Heart left ventricle (tissue), 16 donors: ENCODE measurements at regions of chr22 and their contacts with region 1.

Region 1: GRCh38 chr22:42717197-42717928 is 3.3 kb downstream of the A4GALT start:
- DNase-seq: no peak
- ATAC-seq: peak in 3 of 4 donors; percentile 11 to 27 (median 24)
- H3K4me3 ChIP-seq: peak overlapping the region in 6 of 12 donors; percentile 7 to 26 (median 14)
- H3K27ac ChIP-seq: peak overlapping the region in 11 of 12 donors; percentile 46 to 100 (median 98)
- H3K4me1 ChIP-seq: peaks cover 12 to 80% (median 56%) of the 10 kb centered on the region in 12 donors
- H3K27me3 ChIP-seq: peaks cover 0 to 30% (median 0%) of the 10 kb centered on the region in 9 donors
- CTCF ChIP-seq: no peak
- POLR2A ChIP-seq: no peak

Region 2: GRCh38 chr22:42500161-42500835 is 217.1 kb before region 1 on chr22:
- intact Hi-C with region 1: no loop called
- DNase-seq: peak; percentile 80 to 94 (median 86)
- ATAC-seq: peak; percentile 85 to 95 (median 92)
- H3K4me3 ChIP-seq: peak overlapping the region in 11 of 12 donors; percentile 2 to 55 (median 36)
- H3K27ac ChIP-seq: peak overlapping the region in 5 of 12 donors; percentile 0 to 62 (median 10)
- H3K4me1 ChIP-seq: peaks cover 0 to 17% (median 4%) of the 10 kb centered on the region in 12 donors
- H3K27me3 ChIP-seq: no peaks in the 10 kb centered on the region
- CTCF ChIP-seq: no peak
- POLR2A ChIP-seq: no peak

Region 3: DNA sequence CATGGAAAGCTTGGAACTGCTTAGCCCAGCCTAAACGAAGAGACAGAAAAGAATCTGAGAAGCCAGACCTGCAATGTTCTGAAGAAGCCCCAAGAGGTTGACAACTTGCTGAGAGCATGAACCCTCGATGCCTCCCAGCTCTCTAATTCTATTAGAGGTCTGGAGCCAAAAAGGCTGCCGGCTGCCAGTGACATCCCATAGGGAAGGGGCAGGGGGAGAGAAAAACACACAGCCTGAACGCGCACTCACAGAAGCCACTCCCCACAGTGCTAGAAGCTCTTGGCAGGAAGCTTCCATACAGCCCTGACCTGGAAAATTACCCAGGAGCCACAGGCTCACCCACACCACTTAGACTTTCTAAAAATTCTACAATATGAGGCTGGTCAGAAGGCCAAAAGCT is 121.0 kb before region 1 on chr22:
- intact Hi-C with region 1: no loop called
- DNase-seq: peak; percentile 39 to 72 (median 62)
- ATAC-seq: peak; percentile 84 to 90 (median 87)
- H3K4me3 ChIP-seq: no peak overlapping the region
- H3K27ac ChIP-seq: peak overlapping the region in 11 of 12 donors; percentile 52 to 86 (median 72)
- H3K4me1 ChIP-seq: peaks cover 3 to 35% (median 18%) of the 10 kb centered on the region in 12 donors
- H3K27me3 ChIP-seq: no peaks in the 10 kb centered on the region
- CTCF ChIP-seq: no peak
- POLR2A ChIP-seq: no peak

Region 4: DNA sequence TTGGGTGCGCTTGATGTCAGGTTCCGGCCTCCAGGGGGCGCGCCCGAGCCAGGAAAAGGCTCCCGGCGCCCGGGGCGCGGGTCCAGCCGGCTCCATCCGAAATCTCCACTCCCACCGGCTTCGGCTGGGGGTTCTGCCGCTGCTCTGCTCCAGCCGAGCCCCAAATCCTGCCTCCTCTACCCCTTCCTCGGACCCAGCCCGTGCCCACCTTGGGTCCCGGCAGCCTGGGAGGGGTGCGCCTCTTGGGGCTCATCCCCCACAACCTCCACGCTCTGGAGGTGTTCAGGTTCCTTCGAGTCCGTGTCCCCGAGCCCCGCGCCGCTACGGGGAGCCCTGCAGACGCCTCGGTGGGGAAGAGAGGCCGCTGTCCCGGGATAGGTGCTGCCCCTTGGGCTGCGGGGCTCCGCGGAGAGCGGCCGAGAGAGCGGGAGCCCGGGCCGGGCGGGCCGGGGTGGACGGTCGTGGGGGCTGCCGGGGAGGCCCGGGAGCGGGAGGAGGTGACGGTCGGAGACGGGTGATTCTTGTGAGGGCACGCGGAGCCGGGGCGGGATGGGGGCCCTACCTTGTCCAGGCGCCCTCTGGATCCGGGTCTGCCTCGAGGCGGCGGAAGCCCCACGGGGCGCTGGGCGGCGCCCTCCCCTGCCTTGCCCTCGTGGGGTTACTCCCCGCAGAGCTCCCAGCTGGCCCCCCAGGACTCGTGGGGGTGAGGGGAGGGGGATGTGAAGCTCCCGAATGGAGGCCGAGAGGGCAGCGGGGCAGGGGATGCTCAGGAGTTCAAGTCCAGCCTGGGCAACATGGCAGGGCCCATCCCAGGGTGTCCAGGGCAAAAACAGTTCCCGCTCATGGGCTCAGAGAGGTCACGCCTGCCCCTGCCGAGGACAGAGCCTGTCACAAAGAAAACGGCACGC is 55.0 kb before region 1 on chr22:
- intact Hi-C with region 1: loop called in 4 of 10 experiments (anchors 5 to 10 kb)
- DNase-seq: peak; percentile 81 to 92 (median 84)
- ATAC-seq: peak; percentile 60 to 95 (median 92)
- H3K4me3 ChIP-seq: peak overlapping the region; percentile 26 to 75 (median 57)
- H3K27ac ChIP-seq: peak overlapping the region in 11 of 12 donors; percentile 22 to 76 (median 58)
- H3K4me1 ChIP-seq: peaks cover 0 to 16% (median 11%) of the 10 kb centered on the region in 12 donors
- H3K27me3 ChIP-seq: peaks cover 0 to 9% (median 0%) of the 10 kb centered on the region in 9 donors
- CTCF ChIP-seq: peak in 11 of 12 donors; percentile 77 to 93 (median 84)
- POLR2A ChIP-seq: no peak

Region 5: DNA sequence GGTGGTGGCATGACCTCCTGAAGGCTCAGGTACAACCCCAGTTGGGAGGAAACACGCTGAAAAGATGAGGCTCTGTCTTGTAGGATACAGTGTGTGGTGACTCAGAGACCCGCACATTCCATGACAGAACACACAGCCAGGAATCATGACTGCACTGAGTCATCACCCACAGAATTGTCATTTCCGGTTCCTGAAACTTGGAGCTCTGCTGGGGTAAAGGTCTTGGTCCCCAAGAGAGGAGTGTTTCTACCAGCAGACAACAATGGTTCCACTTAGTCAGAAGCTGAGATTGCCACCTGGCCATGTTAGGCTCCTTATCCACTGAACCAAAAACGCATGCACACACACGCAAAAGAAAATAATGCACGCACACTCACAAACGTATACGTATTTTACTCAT is 36.7 kb before region 1 on chr22:
- intact Hi-C with region 1: loop called in 3 of 10 experiments (anchors 5 kb)
- DNase-seq: peak in 1 of 5 donors; percentile 79
- ATAC-seq: peak in 2 of 4 donors; percentile 27 to 66
- H3K4me3 ChIP-seq: no peak overlapping the region
- H3K27ac ChIP-seq: peak overlapping the region in 7 of 12 donors; percentile 0 to 97 (median 39)
- H3K4me1 ChIP-seq: peaks cover 35 to 92% (median 80%) of the 10 kb centered on the region in 12 donors
- H3K27me3 ChIP-seq: no peaks in the 10 kb centered on the region
- CTCF ChIP-seq: no peak
- POLR2A ChIP-seq: no peak

Region 6: GRCh38 chr22:42688241-42689211 is 28.8 kb before region 1 on chr22:
- intact Hi-C with region 1: loop called in 3 of 10 experiments (anchors 5 kb)
- DNase-seq: peak; percentile 87 to 95 (median 92)
- ATAC-seq: peak; percentile 75 to 81 (median 78)
- H3K4me3 ChIP-seq: peak overlapping the region in 2 of 12 donors; percentile 2 to 4
- H3K27ac ChIP-seq: peak overlapping the region; percentile 84 to 98 (median 94)
- H3K4me1 ChIP-seq: peaks cover 36 to 87% (median 69%) of the 10 kb centered on the region in 12 donors
- H3K27me3 ChIP-seq: no peaks in the 10 kb centered on the region
- CTCF ChIP-seq: no peak
- POLR2A ChIP-seq: peak in 1 of 2 donors; percentile 83

Region 7: GRCh38 chr22:42769574-42770447 is 52.4 kb after region 1 on chr22:
- intact Hi-C with region 1: loop called in 2 of 10 experiments (anchors 5 to 10 kb)
- DNase-seq: peak; percentile 46 to 82 (median 77)
- ATAC-seq: peak; percentile 13 to 73 (median 55)
- H3K4me3 ChIP-seq: peak overlapping the region in 9 of 12 donors; percentile 6 to 49 (median 31)
- H3K27ac ChIP-seq: peak overlapping the region in 2 of 12 donors; percentile 11 to 34
- H3K4me1 ChIP-seq: peaks cover 0 to 29% (median 9%) of the 10 kb centered on the region in 12 donors
- H3K27me3 ChIP-seq: no peaks in the 10 kb centered on the region
- CTCF ChIP-seq: no peak
- POLR2A ChIP-seq: no peak

Region 8: GRCh38 chr22:42780070-42780540 is 62.7 kb after region 1 on chr22:
- intact Hi-C with region 1: loop called in 2 of 10 experiments (anchors 10 kb)
- DNase-seq: peak in 2 of 5 donors; percentile 61 to 77
- ATAC-seq: peak; percentile 54 to 88 (median 88)
- H3K4me3 ChIP-seq: no peak overlapping the region
- H3K27ac ChIP-seq: peak overlapping the region in 2 of 12 donors; percentile 46 to 52
- H3K4me1 ChIP-seq: peaks cover 0 to 9% (median 3%) of the 10 kb centered on the region in 12 donors
- H3K27me3 ChIP-seq: no peaks in the 10 kb centered on the region
- CTCF ChIP-seq: peak; percentile 80 to 93 (median 87)
- POLR2A ChIP-seq: no peak

Region 9: DNA sequence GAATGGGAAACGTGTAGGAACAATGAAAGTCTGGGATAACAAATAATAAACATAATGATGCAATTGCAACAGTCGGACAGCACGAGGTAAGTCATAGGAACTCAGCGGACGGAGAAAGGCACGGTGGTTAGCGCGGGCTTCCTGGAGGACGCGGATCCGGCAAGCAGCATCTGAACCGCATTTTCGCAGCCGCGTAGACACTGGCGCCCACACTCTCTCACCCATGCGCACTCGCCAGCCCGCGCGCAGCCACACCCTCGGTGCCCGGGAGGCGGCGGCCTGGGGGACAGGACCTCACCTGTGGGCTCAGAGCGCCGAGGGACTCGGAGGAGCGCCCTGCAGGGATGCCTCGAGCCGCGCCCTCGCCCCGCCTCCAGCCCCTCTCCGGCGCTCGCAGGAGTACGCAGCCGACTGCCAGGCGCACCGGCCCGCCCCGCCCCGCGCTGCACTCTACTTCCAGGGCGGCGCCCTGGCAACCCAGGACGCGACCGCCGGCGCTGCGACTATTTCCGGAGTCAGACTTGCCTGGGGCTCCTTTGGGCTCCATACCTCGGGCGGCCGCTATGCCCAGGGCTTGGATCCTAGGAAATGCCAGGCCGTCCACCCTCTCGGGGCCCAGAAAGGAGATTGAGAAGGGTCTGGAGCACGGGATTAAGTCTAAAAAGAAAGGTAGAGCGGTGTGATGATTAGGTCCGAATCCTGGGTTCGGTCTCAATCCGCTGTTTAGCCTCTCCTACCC is 371.8 kb after region 1 on chr22 and contains the start of gene TTLL1:
- intact Hi-C with region 1: no loop called
- DNase-seq: peak; percentile 90 to 95 (median 93)
- ATAC-seq: peak; percentile 90 to 95 (median 93)
- H3K4me3 ChIP-seq: peak within 1 kb of the TSS; percentile 38 to 96 (median 84)
- H3K27ac ChIP-seq: peak within 1 kb of the TSS in 11 of 12 donors; percentile 47 to 77 (median 67)
- H3K4me1 ChIP-seq: peaks cover 0 to 30% (median 12%) of the 10 kb centered on the region in 12 donors
- H3K27me3 ChIP-seq: no peaks in the 10 kb centered on the region
- CTCF ChIP-seq: peak in 2 of 12 donors; percentile 14 to 15
- POLR2A ChIP-seq: peak in 1 of 2 donors; percentile 42
- total RNA-seq, gene TTLL1: 4.4 to 13.2 (median 8.4) TPM